ENCODE measurements at regions of chr17 and their contacts with region 1.

Region 1: DNA sequence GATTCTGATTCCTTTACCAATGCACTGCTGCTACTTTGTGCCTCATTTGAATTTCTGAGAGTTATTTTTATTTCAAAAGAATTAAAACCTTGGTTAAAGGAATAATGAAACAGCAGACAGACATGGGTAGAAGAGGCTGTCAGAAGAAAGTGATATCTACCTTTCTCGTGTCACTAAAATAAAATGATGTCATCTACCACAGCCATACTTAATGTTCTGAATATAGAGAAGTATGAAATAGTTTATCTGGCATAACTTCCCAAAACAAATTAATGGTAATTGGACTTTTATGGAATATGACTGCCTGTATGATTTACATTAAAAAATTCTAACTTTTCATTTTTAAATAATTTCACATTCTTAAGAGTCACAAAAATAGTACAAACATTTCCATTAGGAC is 52.5 kb downstream of the EFCAB13 start:
- DNase-seq: no peak
- H3K4me3 ChIP-seq: no peak overlapping the region
- H3K27ac ChIP-seq: no peak overlapping the region
- H3K4me1 ChIP-seq: no peaks in the 10 kb centered on the region
- H3K27me3 ChIP-seq: no peaks in the 10 kb centered on the region
- CTCF ChIP-seq: no peak

Region 2: GRCh38 chr17:47253541-47254402 is 122.5 kb before region 1 on chr17 and contains the start of gene ITGB3:
- CTCF ChIA-PET with region 1: no interaction called
- dilution Hi-C with region 1: no loop called
- in situ Hi-C with region 1: no loop called
- intact Hi-C with region 1: no loop called
- DNase-seq: peak; percentile 71
- H3K4me3 ChIP-seq: peak within 1 kb of the TSS; percentile 41 to 55 (median 54)
- H3K27ac ChIP-seq: no peak within 1 kb of the TSS
- H3K4me1 ChIP-seq: peaks cover 24% of the 10 kb centered on the region
- H3K27me3 ChIP-seq: peaks cover 11% of the 10 kb centered on the region
- CTCF ChIP-seq: peak in 1 of 2 donors; percentile 39
- total RNA-seq, gene ITGB3: 1.3 to 28.7 TPM

Region 3: GRCh38 chr17:47956661-47957590 is 580.7 kb after region 1 on chr17:
- CTCF ChIA-PET with region 1: interaction called, 14 read pairs
- dilution Hi-C with region 1: no loop called
- in situ Hi-C with region 1: no loop called
- intact Hi-C with region 1: no loop called
- DNase-seq: no peak
- H3K4me3 ChIP-seq: no peak overlapping the region
- H3K27ac ChIP-seq: no peak overlapping the region
- H3K4me1 ChIP-seq: peaks cover 8% of the 10 kb centered on the region
- H3K27me3 ChIP-seq: no peaks in the 10 kb centered on the region
- CTCF ChIP-seq: no peak

Measured in mammary epithelial cell (primary cell).